HCT116 (cell line): ENCODE measurements at regions of chr3 and their contacts with region 1.

Region 1: GRCh38 chr3:196969660-196970546 is 1.3 kb upstream of the PIGZ start:
- DNase-seq: no peak
- ATAC-seq: peak; percentile 82
- H3K4me3 ChIP-seq: peak overlapping the region; percentile 47 to 67
- H3K27ac ChIP-seq: peak overlapping the region; percentile 47; the same call in 1 of the 2 replicates
- H3K4me1 ChIP-seq: peaks cover 7 to 21% of the 10 kb centered on the region in 2 experiments; a peak in 2 of 4 replicates
- H3K27me3 ChIP-seq: no peaks in the 10 kb centered on the region
- CTCF ChIP-seq: peak; percentile 45 to 56 (median 54); a peak in 5 of 6 replicates
- POLR2A ChIP-seq: no peak
- RAD21 ChIP-seq: peak; percentile 66

Region 2: GRCh38 chr3:196323701-196324100 is 646.2 kb before region 1 on chr3:
- CTCF ChIA-PET with region 1: no interaction called
- POLR2A ChIA-PET with region 1: no interaction called
- RAD21 ChIA-PET with region 1: no interaction called
- intact Hi-C with region 1: no loop called
- DNase-seq: no peak
- ATAC-seq: peak; percentile 66
- H3K4me3 ChIP-seq: no peak overlapping the region
- H3K27ac ChIP-seq: no peak overlapping the region
- H3K4me1 ChIP-seq: peaks cover 5 to 21% of the 10 kb centered on the region in 2 experiments; a peak in 3 of 4 replicates
- H3K27me3 ChIP-seq: no peaks in the 10 kb centered on the region
- CTCF ChIP-seq: peak in 2 of 3 experiments; percentile 11 to 31; a peak in 2 of 6 replicates
- POLR2A ChIP-seq: no peak
- RAD21 ChIP-seq: no peak

Region 3: DNA sequence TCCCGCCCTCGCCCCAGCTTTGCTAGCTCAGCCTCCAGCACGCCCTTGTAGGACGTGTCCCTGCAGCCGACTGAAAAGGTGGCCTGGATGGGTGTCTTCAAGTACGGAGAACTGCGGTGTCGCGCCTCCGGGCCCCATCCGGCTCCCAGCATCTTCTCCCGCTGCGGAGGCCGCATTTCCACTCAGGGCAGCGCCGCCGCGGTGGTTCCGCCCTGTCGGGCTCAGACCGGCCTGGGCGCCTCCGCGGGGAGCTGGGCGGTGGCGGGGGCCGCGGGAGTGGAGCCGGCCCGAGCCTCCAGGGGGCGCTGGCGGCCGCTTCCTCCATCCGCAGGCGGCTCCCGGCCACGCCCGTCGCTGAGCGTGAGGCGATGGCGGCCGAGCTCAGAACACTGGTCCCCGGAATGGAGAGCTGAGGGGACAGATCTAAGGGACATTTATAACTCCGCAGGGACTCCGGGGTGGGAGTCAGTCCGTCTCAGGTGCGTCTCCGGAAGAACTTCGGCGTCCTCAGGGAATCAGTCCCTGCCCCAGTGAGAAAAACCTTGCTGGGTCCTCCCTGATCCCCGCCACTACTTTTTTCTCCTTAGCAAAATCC is 441.2 kb before region 1 on chr3:
- CTCF ChIA-PET with region 1: interaction called, 3 read pairs
- POLR2A ChIA-PET with region 1: no interaction called
- RAD21 ChIA-PET with region 1: no interaction called
- intact Hi-C with region 1: loop called (anchors 5 kb)
- DNase-seq: peak; percentile 42
- ATAC-seq: peak; percentile 96
- H3K4me3 ChIP-seq: peak overlapping the region; percentile 45 to 54
- H3K27ac ChIP-seq: peak overlapping the region; percentile 12; the same call in 1 of the 2 replicates
- H3K4me1 ChIP-seq: peaks cover 5 to 27% of the 10 kb centered on the region in 2 experiments; a peak in 3 of 4 replicates
- H3K27me3 ChIP-seq: no peaks in the 10 kb centered on the region
- CTCF ChIP-seq: peak; percentile 53 to 84 (median 73); a peak in 5 of 6 replicates
- POLR2A ChIP-seq: peak; percentile 75
- RAD21 ChIP-seq: peak; percentile 57

Region 4: GRCh38 chr3:196609343-196609775 is 360.5 kb before region 1 on chr3:
- CTCF ChIA-PET with region 1: interaction called, 18 read pairs
- POLR2A ChIA-PET with region 1: no interaction called
- RAD21 ChIA-PET with region 1: interaction called, 3 to 4 read pairs
- intact Hi-C with region 1: loop called (anchors 1 kb)
- DNase-seq: peak; percentile 78
- ATAC-seq: peak; percentile 96
- H3K4me3 ChIP-seq: no peak overlapping the region
- H3K27ac ChIP-seq: no peak overlapping the region
- H3K4me1 ChIP-seq: peaks cover 22 to 41% of the 10 kb centered on the region in 2 experiments; a peak in 3 of 4 replicates
- H3K27me3 ChIP-seq: no peaks in the 10 kb centered on the region
- CTCF ChIP-seq: peak; percentile 85 to 97 (median 95)
- POLR2A ChIP-seq: no peak
- RAD21 ChIP-seq: peak; percentile 98

Region 5: GRCh38 chr3:197010556-197011351 is 40.9 kb after region 1 on chr3:
- CTCF ChIA-PET with region 1: no interaction called
- POLR2A ChIA-PET with region 1: no interaction called
- RAD21 ChIA-PET with region 1: no interaction called
- intact Hi-C with region 1: no loop called
- DNase-seq: no peak
- ATAC-seq: no peak
- H3K4me3 ChIP-seq: no peak overlapping the region
- H3K27ac ChIP-seq: no peak overlapping the region
- H3K4me1 ChIP-seq: peaks cover 5 to 17% of the 10 kb centered on the region in 2 experiments; a peak in 3 of 4 replicates
- H3K27me3 ChIP-seq: no peaks in the 10 kb centered on the region
- CTCF ChIP-seq: no peak
- POLR2A ChIP-seq: no peak
- RAD21 ChIP-seq: no peak